ENCODE measurements at regions of chr15 and their contacts with region 1.

Region 1: DNA sequence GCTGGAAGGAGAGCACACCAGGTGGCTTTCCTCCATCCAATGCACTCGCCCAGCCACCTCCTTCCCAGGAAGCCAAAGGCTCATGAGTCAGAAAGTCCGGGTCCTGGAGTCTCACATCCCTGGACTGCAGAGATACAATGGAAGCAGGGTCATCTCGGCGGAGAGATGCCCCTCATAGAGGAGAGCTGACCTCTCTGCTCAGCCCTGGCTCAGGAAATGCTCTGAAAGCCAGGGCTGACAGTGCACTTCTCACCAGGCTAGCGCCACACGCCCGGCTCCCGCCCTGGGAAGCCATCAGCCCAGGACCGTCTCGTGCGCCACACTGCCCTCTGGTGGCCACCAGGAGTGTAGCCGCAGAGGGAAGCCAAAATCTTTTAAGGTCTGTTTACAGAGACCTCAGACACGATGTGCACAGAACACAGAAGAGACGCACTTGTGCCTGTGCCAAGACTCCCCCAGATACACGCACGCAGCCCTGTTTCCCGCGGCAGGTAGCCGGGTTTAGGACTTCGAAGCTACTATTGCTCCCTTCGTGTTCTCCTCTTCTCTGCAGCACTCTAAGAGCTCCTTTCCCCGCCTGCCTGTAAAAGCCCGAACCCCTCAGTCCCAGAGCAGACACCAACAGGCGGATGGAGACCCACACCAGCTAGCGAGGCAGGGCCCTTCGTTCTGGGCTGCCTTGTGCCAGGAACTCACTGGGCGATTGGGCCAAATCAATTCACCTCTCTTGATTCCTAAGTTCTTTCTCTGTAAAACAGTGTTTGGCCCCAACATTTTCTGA is 9.7 kb downstream of the NTRK3 start:
- DNase-seq: no peak
- ATAC-seq: peak; percentile 94
- H3K4me3 ChIP-seq: no peak overlapping the region
- H3K27ac ChIP-seq: no peak overlapping the region
- H3K4me1 ChIP-seq: no peaks in the 10 kb centered on the region
- H3K27me3 ChIP-seq: peaks cover 0 to 2% of the 10 kb centered on the region in 2 experiments; a peak in 2 of 4 replicates
- CTCF ChIP-seq: peak; percentile 78 to 93 (median 90)
- EP300 ChIP-seq: no peak
- POLR2A ChIP-seq: no peak
- RAD21 ChIP-seq: peak; percentile 69

Region 2: GRCh38 chr15:86929461-86929860 is 1317.4 kb before region 1 on chr15:
- CTCF ChIA-PET with region 1: no interaction called
- POLR2A ChIA-PET with region 1: no interaction called
- RAD21 ChIA-PET with region 1: no interaction called
- SMC1A ChIA-PET with region 1: no interaction called
- in situ Hi-C with region 1: no loop called
- intact Hi-C with region 1: loop called (anchors 5 kb)
- DNase-seq: no peak
- ATAC-seq: no peak
- H3K4me3 ChIP-seq: no peak overlapping the region
- H3K27ac ChIP-seq: no peak overlapping the region
- H3K4me1 ChIP-seq: no peaks in the 10 kb centered on the region
- H3K27me3 ChIP-seq: no peaks in the 10 kb centered on the region
- CTCF ChIP-seq: no peak
- EP300 ChIP-seq: no peak
- POLR2A ChIP-seq: no peak
- RAD21 ChIP-seq: no peak

Region 3: GRCh38 chr15:88230823-88231222 is 16.0 kb before region 1 on chr15:
- CTCF ChIA-PET with region 1: interaction called, 20 read pairs
- POLR2A ChIA-PET with region 1: no interaction called
- RAD21 ChIA-PET with region 1: no interaction called
- SMC1A ChIA-PET with region 1: no interaction called
- in situ Hi-C with region 1: no loop called
- intact Hi-C with region 1: no loop called
- DNase-seq: no peak
- ATAC-seq: no peak
- H3K4me3 ChIP-seq: no peak overlapping the region
- H3K27ac ChIP-seq: no peak overlapping the region
- H3K4me1 ChIP-seq: no peaks in the 10 kb centered on the region
- H3K27me3 ChIP-seq: no peaks in the 10 kb centered on the region; a peak in 1 of 4 replicates
- CTCF ChIP-seq: no peak
- EP300 ChIP-seq: no peak
- POLR2A ChIP-seq: no peak
- RAD21 ChIP-seq: no peak

Region 4: DNA sequence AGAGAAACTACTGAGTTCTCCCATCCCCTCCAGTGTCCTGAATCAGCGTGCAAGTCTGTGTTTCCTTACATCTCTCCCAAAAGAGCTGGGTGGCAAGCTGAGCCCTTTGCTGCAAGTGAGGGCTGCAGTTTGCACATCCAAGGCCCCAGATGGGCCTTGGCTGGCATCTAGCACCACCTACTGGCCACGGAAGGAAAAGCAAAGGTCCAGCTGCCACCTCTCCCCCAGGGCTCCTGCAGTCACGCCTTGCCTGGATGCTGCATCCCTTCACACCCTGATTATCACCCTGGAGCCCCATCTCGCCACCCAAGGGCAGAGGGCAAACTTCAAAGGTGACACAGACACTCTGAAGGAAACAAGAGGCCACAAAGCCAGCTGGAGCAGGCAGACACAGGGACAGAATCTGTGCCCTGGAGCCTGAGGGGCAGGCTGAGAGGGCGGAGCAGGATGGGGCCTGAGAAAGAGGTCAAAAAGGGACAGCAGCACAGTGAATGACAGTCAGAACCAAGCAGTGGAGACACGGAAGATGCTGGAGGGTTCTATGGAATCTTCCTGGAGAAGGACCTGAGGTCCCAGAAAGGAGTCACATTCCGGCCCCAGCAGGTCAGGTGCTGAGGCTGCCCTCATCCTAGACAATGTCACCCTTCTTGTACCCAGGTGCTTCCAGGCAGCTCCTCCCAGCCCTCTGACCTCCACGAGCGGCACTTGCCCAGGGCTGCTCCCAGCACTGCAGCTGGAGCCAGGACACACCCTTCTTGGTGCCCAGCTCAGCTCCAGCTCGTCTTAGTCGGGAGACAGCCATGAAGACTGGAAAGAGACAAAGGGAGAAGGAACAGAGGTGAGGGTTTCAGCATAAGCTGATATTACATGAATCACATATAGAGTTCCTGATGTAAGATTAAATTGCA is 28.0 kb after region 1 on chr15:
- CTCF ChIA-PET with region 1: interaction called, 42 read pairs
- POLR2A ChIA-PET with region 1: no interaction called
- RAD21 ChIA-PET with region 1: no interaction called
- SMC1A ChIA-PET with region 1: interaction called, 6 read pairs
- in situ Hi-C with region 1: no loop called
- intact Hi-C with region 1: no loop called
- DNase-seq: no peak
- ATAC-seq: peak; percentile 94
- H3K4me3 ChIP-seq: no peak overlapping the region
- H3K27ac ChIP-seq: no peak overlapping the region
- H3K4me1 ChIP-seq: no peaks in the 10 kb centered on the region
- H3K27me3 ChIP-seq: no peaks in the 10 kb centered on the region; a peak in 2 of 4 replicates
- CTCF ChIP-seq: peak; percentile 76 to 90 (median 88)
- EP300 ChIP-seq: no peak
- POLR2A ChIP-seq: no peak
- RAD21 ChIP-seq: peak; percentile 58

Region 5: GRCh38 chr15:88454867-88455810 is 208.3 kb after region 1 on chr15:
- CTCF ChIA-PET with region 1: interaction called, 5 read pairs
- POLR2A ChIA-PET with region 1: no interaction called
- RAD21 ChIA-PET with region 1: no interaction called
- SMC1A ChIA-PET with region 1: no interaction called
- in situ Hi-C with region 1: no loop called
- intact Hi-C with region 1: loop called (anchors 2 kb)
- DNase-seq: no peak
- ATAC-seq: peak; percentile 97
- H3K4me3 ChIP-seq: no peak overlapping the region
- H3K27ac ChIP-seq: no peak overlapping the region
- H3K4me1 ChIP-seq: no peaks in the 10 kb centered on the region
- H3K27me3 ChIP-seq: no peaks in the 10 kb centered on the region
- CTCF ChIP-seq: peak; percentile 61 to 76 (median 74)
- EP300 ChIP-seq: no peak
- POLR2A ChIP-seq: peak; percentile 49
- RAD21 ChIP-seq: 0 out of 2 replicates have a peak, but pooled peaks have one; percentile 8